ENCODE measurements at regions of chr17 and their contacts with region 1.

Region 1: GRCh38 chr17:38799378-38800236 is at the start of gene PIP4K2B:
- DNase-seq: peak; percentile 91 to 99 (median 94)

Region 2: GRCh38 chr17:38752119-38752929 is 47.3 kb before region 1 on chr17 and contains the start of gene PSMB3:
- intact Hi-C with region 1: loop called (anchors 5 kb)
- DNase-seq: peak; percentile 95 to 99 (median 98)

Region 3: GRCh38 chr17:38768417-38768816 is 31.2 kb before region 1 on chr17:
- intact Hi-C with region 1: no loop called
- DNase-seq: peak in 1 of 10 donors; percentile 16

Measured in posterior cingulate gyrus (tissue), 11 donors.